ENCODE measurements at regions of chr11 and their contacts with region 1.

Region 1: GRCh38 chr11:121741761-121742361 is 289.1 kb upstream of the SORL1-AS1 start:
- DNase-seq: peak; percentile 74 to 81
- ATAC-seq: peak; percentile 87 to 98 (median 94)
- H3K4me3 ChIP-seq: peak overlapping the region in 3 of 10 donors; percentile 5 to 25 (median 16)
- H3K27ac ChIP-seq: peak overlapping the region; percentile 51 to 87 (median 81)
- H3K4me1 ChIP-seq: peaks cover 5 to 28% (median 19%) of the 10 kb centered on the region in 9 donors
- H3K27me3 ChIP-seq: no peaks in the 10 kb centered on the region
- CTCF ChIP-seq: peak in 2 of 9 donors; percentile 30 to 35

Region 2: GRCh38 chr11:122108192-122108799 is 366.4 kb after region 1 on chr11:
- intact Hi-C with region 1: loop called in 1 of 10 experiments (anchors 10 kb)
- DNase-seq: no peak
- ATAC-seq: no peak
- H3K4me3 ChIP-seq: no peak overlapping the region
- H3K27ac ChIP-seq: peak overlapping the region in 9 of 10 donors; percentile 12 to 70 (median 61)
- H3K4me1 ChIP-seq: peaks cover 0 to 30% (median 10%) of the 10 kb centered on the region in 9 donors
- H3K27me3 ChIP-seq: no peaks in the 10 kb centered on the region
- CTCF ChIP-seq: peak; percentile 20 to 57 (median 50)

Measured in heart right ventricle (tissue), 16 donors.